B cell (primary cell): ENCODE measurements at regions of chr7 and their contacts with region 1.

Region 1: DNA sequence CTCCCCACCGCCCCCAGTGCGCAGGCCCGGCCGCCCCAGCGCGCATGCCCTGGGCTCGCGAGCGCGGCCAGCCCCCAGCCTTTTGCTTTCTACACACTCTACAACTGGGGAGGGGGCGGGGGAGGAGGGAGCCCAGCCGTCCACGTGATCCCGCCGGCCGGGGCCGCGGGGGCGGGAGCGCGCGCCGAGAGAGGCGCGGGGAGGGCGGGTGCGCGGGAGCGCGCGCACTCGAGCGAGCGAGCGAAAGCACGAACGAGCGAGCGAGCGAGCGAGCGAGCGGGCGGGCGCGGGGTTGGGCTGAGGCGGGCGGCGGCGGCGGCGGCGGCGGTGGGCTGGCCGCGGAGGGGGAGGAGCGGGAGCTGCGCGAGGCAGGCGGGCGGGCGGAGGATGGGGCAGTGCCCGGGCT is at the start of gene AUTS2:
- DNase-seq: peak; percentile 90
- ATAC-seq: peak; percentile 76
- H3K4me3 ChIP-seq: peak within 1 kb of the TSS; percentile 65 to 82 (median 69)
- H3K4me3 Mint-ChIP-seq: peak within 1 kb of the TSS; percentile 96
- H3K27ac ChIP-seq: peak within 1 kb of the TSS; percentile 59 to 77
- H3K27ac Mint-ChIP-seq: peak within 1 kb of the TSS; percentile 86
- H3K4me1 ChIP-seq: peaks cover 12 to 29% of the 10 kb centered on the region in 2 donors
- H3K4me1 Mint-ChIP-seq: peaks cover 22% of the 10 kb centered on the region
- H3K27me3 ChIP-seq: peaks cover 0 to 3% (median 0%) of the 10 kb centered on the region in 4 experiments
- H3K27me3 Mint-ChIP-seq: no peaks in the 10 kb centered on the region
- CTCF ChIP-seq: no peak
- total RNA-seq, gene AUTS2: 35.0 and 37.4 TPM in 2 replicates

Region 2: DNA sequence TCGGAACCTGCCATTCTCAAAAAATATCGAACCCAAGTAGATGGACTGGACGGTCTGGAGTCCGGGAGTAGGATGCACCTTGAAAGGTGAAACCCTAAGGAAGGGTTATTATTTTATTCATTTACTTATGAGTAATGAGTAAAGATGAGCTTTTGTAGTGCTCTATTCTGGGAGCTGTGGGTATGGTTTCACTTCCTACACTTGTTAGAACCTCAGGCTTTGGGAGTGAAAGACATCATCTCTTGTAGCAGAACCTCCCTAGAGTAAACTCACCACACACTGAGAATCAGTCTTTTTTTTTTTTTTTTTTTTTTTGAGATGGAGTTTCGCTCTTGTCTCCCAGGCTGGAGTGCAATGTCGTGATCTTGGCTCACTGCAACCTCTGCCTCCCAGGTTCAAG is 389.2 kb before region 1 on chr7:
- CTCF ChIA-PET with region 1: no interaction called
- POLR2A ChIA-PET with region 1: no interaction called
- intact Hi-C with region 1: no loop called
- DNase-seq: peak; percentile 62
- ATAC-seq: peak; percentile 80
- H3K4me3 ChIP-seq: no peak overlapping the region
- H3K4me3 Mint-ChIP-seq: peak overlapping the region; percentile 42
- H3K27ac ChIP-seq: peak overlapping the region in 1 of 2 donors; percentile 23
- H3K27ac Mint-ChIP-seq: peak overlapping the region; percentile 75
- H3K4me1 ChIP-seq: peaks cover 15 to 22% of the 10 kb centered on the region in 2 donors
- H3K4me1 Mint-ChIP-seq: peaks cover 20% of the 10 kb centered on the region
- H3K27me3 ChIP-seq: no peaks in the 10 kb centered on the region
- H3K27me3 Mint-ChIP-seq: no peaks in the 10 kb centered on the region
- CTCF ChIP-seq: no peak

Region 3: DNA sequence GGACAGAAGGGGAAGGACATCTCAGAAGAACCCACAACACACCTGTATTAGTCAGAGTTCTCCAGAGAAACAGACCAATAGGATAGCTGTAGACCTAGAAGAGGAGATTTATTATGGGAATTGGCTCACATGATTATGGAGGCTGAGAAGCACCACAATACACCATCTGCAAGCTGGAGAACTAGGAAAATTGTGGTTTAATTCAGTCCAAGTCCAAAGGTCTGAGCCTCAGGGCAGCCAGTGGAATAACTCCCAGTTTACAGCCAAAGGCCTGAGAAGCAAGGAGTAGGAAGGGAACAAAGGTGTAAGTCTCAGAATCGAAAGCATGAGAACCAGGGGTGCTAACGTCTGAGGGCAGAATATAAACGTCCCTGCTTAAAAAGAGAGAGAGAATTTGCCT is 99.4 kb before region 1 on chr7:
- CTCF ChIA-PET with region 1: no interaction called
- POLR2A ChIA-PET with region 1: no interaction called
- intact Hi-C with region 1: loop called (anchors 5 kb)
- DNase-seq: no peak
- ATAC-seq: no peak
- H3K4me3 ChIP-seq: no peak overlapping the region
- H3K4me3 Mint-ChIP-seq: no peak overlapping the region
- H3K27ac ChIP-seq: no peak overlapping the region
- H3K27ac Mint-ChIP-seq: no peak overlapping the region
- H3K4me1 ChIP-seq: peaks cover 6 to 12% of the 10 kb centered on the region in 2 donors
- H3K4me1 Mint-ChIP-seq: peaks cover 13% of the 10 kb centered on the region
- H3K27me3 ChIP-seq: no peaks in the 10 kb centered on the region
- H3K27me3 Mint-ChIP-seq: no peaks in the 10 kb centered on the region
- CTCF ChIP-seq: no peak

Region 4: DNA sequence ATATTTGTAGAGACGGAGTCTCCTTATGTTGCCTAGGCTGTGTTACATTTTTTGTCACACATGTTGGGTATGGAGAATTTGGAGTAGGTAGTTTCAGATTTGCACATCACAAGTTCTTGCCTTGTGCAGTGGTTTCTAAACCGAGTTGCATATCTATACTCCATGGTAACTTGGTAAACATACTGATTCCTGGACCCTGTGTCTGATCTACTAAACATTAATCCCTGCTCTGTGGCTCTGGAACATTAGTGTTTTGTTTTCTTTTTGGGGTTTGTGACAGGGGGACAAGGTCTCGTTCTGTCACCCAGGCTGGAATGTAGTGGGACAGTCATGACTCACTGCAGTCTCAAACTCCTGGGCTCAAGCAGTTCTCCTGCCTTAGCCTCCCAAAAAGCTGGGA is 24.9 kb after region 1 on chr7:
- CTCF ChIA-PET with region 1: no interaction called
- POLR2A ChIA-PET with region 1: no interaction called
- intact Hi-C with region 1: no loop called
- DNase-seq: no peak
- ATAC-seq: no peak
- H3K4me3 ChIP-seq: no peak overlapping the region
- H3K4me3 Mint-ChIP-seq: no peak overlapping the region
- H3K27ac ChIP-seq: no peak overlapping the region
- H3K27ac Mint-ChIP-seq: no peak overlapping the region
- H3K4me1 ChIP-seq: no peaks in the 10 kb centered on the region
- H3K4me1 Mint-ChIP-seq: peaks cover 6% of the 10 kb centered on the region
- H3K27me3 ChIP-seq: no peaks in the 10 kb centered on the region
- H3K27me3 Mint-ChIP-seq: no peaks in the 10 kb centered on the region
- CTCF ChIP-seq: no peak

Region 5: DNA sequence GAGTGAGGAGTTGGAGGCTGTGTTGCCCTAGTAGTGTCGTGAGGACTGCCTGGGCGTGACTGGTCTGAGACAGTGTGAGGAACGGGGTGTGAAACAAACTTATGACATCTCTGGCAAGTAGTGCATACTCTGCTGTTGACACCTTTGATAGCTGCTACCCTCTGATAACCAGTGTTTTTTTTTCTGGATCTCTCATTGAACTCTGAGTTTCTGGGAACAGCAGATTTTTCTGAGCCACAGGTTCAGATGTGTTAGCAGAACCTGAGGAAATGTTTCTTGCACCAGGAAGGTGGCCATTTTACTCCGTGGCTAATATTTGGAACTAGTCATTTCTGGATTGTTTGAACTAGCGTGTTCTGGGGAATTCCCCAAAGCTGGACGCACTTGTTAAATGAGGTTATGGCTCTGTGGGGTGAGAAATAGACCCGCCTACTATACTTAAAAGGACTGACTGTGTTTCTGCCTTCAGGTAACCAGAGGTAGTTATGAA is 53.1 kb after region 1 on chr7:
- CTCF ChIA-PET with region 1: no interaction called
- POLR2A ChIA-PET with region 1: no interaction called
- intact Hi-C with region 1: loop called (anchors 10 kb)
- DNase-seq: peak; percentile 33
- ATAC-seq: peak; percentile 39
- H3K4me3 ChIP-seq: no peak overlapping the region
- H3K4me3 Mint-ChIP-seq: no peak overlapping the region
- H3K27ac ChIP-seq: no peak overlapping the region
- H3K27ac Mint-ChIP-seq: no peak overlapping the region
- H3K4me1 ChIP-seq: peaks cover 9 to 24% of the 10 kb centered on the region in 2 donors
- H3K4me1 Mint-ChIP-seq: peaks cover 41% of the 10 kb centered on the region
- H3K27me3 ChIP-seq: no peaks in the 10 kb centered on the region
- H3K27me3 Mint-ChIP-seq: no peaks in the 10 kb centered on the region
- CTCF ChIP-seq: no peak

Region 6: GRCh38 chr7:69739931-69740431 is 141.9 kb after region 1 on chr7:
- CTCF ChIA-PET with region 1: no interaction called
- POLR2A ChIA-PET with region 1: no interaction called
- intact Hi-C with region 1: loop called (anchors 5 kb)
- DNase-seq: peak; percentile 41
- ATAC-seq: peak; percentile 64
- H3K4me3 ChIP-seq: no peak overlapping the region
- H3K4me3 Mint-ChIP-seq: peak overlapping the region; percentile 20
- H3K27ac ChIP-seq: no peak overlapping the region
- H3K27ac Mint-ChIP-seq: peak overlapping the region; percentile 20
- H3K4me1 ChIP-seq: peaks cover 24 to 31% of the 10 kb centered on the region in 2 donors
- H3K4me1 Mint-ChIP-seq: peaks cover 33% of the 10 kb centered on the region
- H3K27me3 ChIP-seq: no peaks in the 10 kb centered on the region
- H3K27me3 Mint-ChIP-seq: no peaks in the 10 kb centered on the region
- CTCF ChIP-seq: no peak

Region 7: DNA sequence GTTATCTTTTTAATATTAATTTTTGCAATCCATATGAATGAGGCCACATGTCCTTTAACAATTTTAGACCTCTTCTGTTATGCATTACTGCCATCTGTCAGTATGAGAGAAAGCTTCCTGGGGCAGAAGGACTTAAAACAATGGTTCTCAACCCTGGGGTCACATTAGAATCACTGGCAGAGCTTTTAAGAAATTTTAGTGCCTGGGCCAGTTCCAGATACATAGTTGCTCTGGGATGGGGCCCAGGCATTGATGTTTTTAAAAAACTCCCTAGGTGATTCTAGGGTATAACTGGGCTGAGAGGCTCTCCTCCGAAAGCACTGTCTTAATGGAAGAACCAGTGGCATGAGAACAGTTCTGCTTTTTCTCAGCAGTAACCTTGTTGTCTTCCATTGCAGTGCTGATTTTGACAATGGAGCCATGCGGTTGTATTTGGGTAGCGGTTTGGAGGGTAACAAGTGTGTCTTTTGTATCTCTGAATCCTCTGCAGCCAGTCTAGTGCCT is 227.1 kb after region 1 on chr7:
- CTCF ChIA-PET with region 1: no interaction called
- POLR2A ChIA-PET with region 1: no interaction called
- intact Hi-C with region 1: loop called (anchors 1 kb)
- DNase-seq: peak; percentile 54
- ATAC-seq: peak; percentile 18
- H3K4me3 ChIP-seq: peak overlapping the region; percentile 24 to 83 (median 65)
- H3K4me3 Mint-ChIP-seq: peak overlapping the region; percentile 94
- H3K27ac ChIP-seq: peak overlapping the region; percentile 78 to 81
- H3K27ac Mint-ChIP-seq: peak overlapping the region; percentile 98
- H3K4me1 ChIP-seq: peaks cover 52 to 58% of the 10 kb centered on the region in 2 donors
- H3K4me1 Mint-ChIP-seq: peaks cover 69% of the 10 kb centered on the region
- H3K27me3 ChIP-seq: no peaks in the 10 kb centered on the region
- H3K27me3 Mint-ChIP-seq: no peaks in the 10 kb centered on the region
- CTCF ChIP-seq: no peak

Region 8: GRCh38 chr7:69893906-69894305 is 295.8 kb after region 1 on chr7:
- CTCF ChIA-PET with region 1: no interaction called
- POLR2A ChIA-PET with region 1: no interaction called
- intact Hi-C with region 1: loop called (anchors 5 kb)
- DNase-seq: peak; percentile 26
- ATAC-seq: peak; percentile 24
- H3K4me3 ChIP-seq: no peak overlapping the region
- H3K4me3 Mint-ChIP-seq: no peak overlapping the region
- H3K27ac ChIP-seq: no peak overlapping the region
- H3K27ac Mint-ChIP-seq: no peak overlapping the region
- H3K4me1 ChIP-seq: peaks cover 8 to 14% of the 10 kb centered on the region in 2 donors
- H3K4me1 Mint-ChIP-seq: peaks cover 36% of the 10 kb centered on the region
- H3K27me3 ChIP-seq: no peaks in the 10 kb centered on the region
- H3K27me3 Mint-ChIP-seq: no peaks in the 10 kb centered on the region
- CTCF ChIP-seq: peak; percentile 49

Region 9: DNA sequence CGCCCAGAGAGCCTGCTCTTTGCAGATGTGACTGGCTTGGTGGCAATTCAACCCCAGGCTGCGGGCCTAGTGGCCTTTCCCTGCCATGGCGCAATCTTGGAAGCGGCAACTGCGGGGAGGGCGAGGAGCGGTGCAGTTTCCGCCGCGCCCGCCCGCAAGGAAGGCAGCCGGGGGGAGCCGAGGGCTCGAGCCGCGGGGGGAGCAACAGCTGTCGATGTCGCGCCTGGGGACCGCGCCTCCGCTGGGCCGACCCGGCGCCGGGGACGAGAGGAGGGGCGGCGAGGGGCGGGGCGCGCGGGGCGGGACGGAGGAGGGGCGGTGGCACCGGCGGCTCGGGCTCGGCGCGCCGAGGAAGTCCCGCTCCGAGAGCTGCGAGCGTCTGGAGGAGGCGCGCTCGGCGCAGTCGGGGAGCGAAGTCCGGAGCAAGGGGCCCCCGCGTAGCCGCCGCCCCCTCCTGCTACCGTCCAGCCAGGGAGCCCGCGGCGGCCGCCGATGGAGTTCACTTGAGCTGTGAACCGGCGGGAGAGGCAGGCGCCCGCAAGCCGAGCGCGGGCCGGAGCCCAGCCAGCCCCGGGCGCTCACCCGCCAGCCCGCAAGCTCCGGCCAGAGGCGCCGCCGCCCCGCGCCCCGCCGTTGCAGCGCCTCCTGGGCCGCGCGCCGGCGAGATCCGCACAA is 1095.7 kb after region 1 on chr7:
- CTCF ChIA-PET with region 1: no interaction called
- POLR2A ChIA-PET with region 1: no interaction called
- intact Hi-C with region 1: loop called (anchors 10 kb)
- DNase-seq: peak; percentile 58
- ATAC-seq: peak; percentile 69
- H3K4me3 ChIP-seq: peak overlapping the region in 4 of 5 experiments; percentile 13 to 71 (median 40)
- H3K4me3 Mint-ChIP-seq: peak overlapping the region; percentile 87
- H3K27ac ChIP-seq: no peak overlapping the region
- H3K27ac Mint-ChIP-seq: peak overlapping the region; percentile 60
- H3K4me1 ChIP-seq: peaks cover 15% of the 10 kb centered on the region in 2 donors
- H3K4me1 Mint-ChIP-seq: peaks cover 16% of the 10 kb centered on the region
- H3K27me3 ChIP-seq: peaks cover 0 to 27% (median 12%) of the 10 kb centered on the region in 4 experiments
- H3K27me3 Mint-ChIP-seq: peaks cover 22% of the 10 kb centered on the region
- CTCF ChIP-seq: no peak